A549 (cell line): ENCODE measurements at regions of chr14 and their contacts with region 1.

Region 1: DNA sequence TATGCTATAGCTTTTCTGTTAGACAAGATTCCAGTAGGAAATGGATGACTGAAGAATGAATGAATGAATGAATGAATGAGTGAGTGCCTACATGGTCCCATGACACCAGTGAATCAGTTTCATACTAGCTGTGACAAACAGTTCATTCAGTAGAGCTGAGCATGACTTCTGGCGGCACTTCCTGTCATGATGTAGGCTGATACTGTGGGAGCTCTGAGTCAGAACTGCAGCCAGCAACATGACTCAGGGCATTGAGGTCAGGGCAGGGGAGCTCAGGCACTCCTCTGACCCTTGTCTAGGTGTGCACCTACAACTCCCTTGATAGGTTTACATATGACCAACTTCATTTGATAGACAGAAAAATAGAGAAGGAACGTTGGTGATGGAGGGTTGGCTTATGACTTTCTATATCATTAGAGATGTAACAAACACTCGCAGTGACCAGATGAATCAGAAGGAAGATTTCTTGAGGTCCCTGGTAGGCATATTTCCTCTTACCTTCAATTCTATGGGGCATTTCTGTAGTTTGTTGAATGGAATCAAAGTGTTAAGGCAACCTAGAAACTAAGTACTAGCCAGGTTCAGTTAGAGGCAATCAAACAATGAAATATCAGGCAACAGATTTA is 139.3 kb upstream of the ARHGAP5 start:
- DNase-seq: peak; percentile 75 to 96
- ATAC-seq: peak; percentile 94 to 97
- H3K4me3 ChIP-seq: no peak overlapping the region
- H3K27ac ChIP-seq: peak overlapping the region; percentile 82 to 89
- H3K4me1 ChIP-seq: peaks cover 76% of the 10 kb centered on the region
- CTCF ChIP-seq: no peak
- EP300 ChIP-seq: peak; percentile 35 to 55; a peak in 1 of 5 replicates
- POLR2A ChIP-seq: no peak
- RAD21 ChIP-seq: peak; percentile 19 to 40; a peak in 2 of 5 replicates

Region 2: DNA sequence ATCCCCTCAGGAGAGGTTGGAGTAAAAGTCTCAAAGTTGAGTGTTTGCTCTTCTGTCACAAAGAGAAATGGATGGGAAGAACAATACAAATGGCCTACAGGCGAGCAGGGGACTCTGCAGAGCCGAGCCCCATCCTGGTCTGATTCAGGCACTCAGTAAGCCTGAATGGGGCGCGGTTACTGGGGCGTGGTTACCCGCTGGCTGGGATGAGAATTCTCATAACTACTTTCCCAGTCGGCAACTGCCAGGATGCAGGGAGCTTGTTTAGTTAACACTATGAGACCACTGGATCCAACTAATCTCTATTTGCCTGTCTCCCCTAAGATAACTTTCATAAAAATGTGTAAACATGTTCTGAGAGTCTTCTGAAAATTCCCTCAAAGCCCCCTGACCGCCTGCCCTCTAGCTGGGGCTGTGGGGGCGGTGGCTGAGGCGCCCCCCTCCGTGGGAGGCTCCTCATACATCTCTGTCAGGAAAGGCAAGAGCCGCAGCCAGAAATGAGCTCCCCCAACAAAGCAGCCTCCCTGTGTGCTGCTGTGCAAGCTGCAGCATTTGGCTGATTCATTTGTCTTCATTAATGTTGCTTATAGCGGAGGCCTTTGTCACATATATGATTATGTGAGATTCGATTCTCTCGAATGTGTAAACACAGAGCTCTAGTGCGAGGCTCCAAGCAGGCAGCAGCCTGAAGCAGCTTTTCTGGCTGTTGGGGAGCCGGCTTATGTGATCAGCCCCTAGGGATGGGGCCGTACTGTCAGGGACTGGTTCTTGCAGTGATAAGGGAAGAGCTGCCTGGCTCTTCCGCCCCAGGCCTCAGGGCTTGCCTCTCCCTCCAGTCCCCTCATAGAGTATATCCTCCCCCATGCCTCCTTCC is 13.2 kb after region 1 on chr14:
- CTCF ChIA-PET with region 1: interaction called, 12 read pairs
- POLR2A ChIA-PET with region 1: no interaction called
- DNase-seq: peak; percentile 73 to 89
- ATAC-seq: peak; percentile 94 to 96
- H3K4me3 ChIP-seq: no peak overlapping the region
- H3K27ac ChIP-seq: peak overlapping the region; percentile 82 to 83
- H3K4me1 ChIP-seq: peaks cover 82% of the 10 kb centered on the region
- CTCF ChIP-seq: no peak
- EP300 ChIP-seq: 0 out of 5 replicates have a peak, but pooled peaks of 1 of the 2 experiments have one; percentile 27
- POLR2A ChIP-seq: no peak
- RAD21 ChIP-seq: no peak

Region 3: GRCh38 chr14:32009976-32010863 is 72.4 kb after region 1 on chr14:
- CTCF ChIA-PET with region 1: interaction called, 29 read pairs
- POLR2A ChIA-PET with region 1: interaction called, 11 read pairs
- DNase-seq: peak; percentile 81 to 95
- ATAC-seq: peak; percentile 88 to 90
- H3K4me3 ChIP-seq: no peak overlapping the region
- H3K27ac ChIP-seq: peak overlapping the region; percentile 89 to 92
- H3K4me1 ChIP-seq: peaks cover 72% of the 10 kb centered on the region
- CTCF ChIP-seq: no peak
- EP300 ChIP-seq: peak; percentile 83 to 87; a peak in 4 of 5 replicates
- POLR2A ChIP-seq: no peak
- RAD21 ChIP-seq: peak; percentile 44 to 59; a peak in 4 of 5 replicates

Region 4: DNA sequence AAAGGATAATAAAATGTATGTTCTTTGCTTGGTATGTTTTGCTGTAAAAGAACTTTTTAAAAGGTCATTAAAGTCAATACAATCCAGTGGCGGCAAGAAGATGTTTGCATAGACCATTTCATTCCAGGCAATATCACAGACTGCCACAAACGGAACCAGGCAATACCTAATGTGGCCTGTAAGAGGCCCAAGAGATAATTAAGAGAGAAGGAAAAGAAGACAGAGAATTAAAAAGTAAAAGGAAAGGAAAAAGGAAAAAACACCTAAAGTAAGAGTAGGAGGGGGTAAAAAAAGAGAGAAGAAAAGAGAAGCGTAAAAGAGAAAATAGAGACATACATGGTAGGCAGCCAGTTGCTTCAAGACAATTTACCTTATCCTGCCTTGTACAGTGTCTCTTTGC is 132.4 kb after region 1 on chr14:
- CTCF ChIA-PET with region 1: interaction called, 15 read pairs
- POLR2A ChIA-PET with region 1: interaction called, 4 read pairs
- DNase-seq: no peak
- ATAC-seq: no peak
- H3K4me3 ChIP-seq: no peak overlapping the region
- H3K27ac ChIP-seq: no peak overlapping the region
- H3K4me1 ChIP-seq: peaks cover 16% of the 10 kb centered on the region
- CTCF ChIP-seq: no peak
- EP300 ChIP-seq: no peak
- POLR2A ChIP-seq: no peak
- RAD21 ChIP-seq: no peak

Region 5: DNA sequence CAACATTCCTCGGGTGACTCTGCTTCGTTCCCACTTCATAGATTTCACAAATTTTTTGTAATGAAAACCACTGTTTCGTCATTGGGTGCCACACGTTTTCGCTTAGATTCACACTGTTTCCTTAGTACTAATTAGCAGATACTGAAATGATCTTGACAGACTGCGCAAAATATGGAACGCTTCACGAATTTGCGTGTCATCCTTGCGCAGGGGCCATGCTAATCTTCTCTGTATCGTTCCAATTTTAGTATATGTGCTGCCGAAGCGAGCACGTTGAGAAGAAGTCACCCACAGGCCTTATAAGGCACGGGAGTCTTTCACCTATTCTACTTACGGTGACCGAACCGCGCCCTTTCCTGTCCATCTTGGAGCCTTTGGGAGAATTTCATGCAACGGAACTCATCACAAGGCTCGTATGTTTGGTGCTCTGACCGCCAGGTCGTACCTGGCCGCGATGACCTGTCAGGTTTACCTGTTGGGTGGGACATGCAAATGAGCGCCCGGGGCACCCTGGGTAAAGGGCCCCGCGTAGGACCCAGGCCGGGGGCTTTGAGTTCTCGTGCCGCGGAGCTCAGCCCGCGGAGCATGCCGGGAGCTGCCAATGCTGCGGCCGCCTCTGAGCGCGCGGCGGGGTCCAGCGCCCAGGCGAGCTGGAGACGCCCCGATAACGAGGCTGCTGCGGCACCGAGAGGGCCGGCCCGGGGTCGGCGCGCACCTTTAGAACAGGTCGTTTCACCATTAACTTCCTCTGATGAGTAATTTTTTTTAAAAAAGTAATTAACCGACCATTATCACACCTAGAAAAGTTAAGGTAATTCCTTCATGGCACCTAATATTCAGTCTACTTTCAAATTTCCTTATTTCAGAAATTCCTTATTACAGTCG is 265.4 kb after region 1 on chr14 and contains the start of gene RNU6-8:
- CTCF ChIA-PET with region 1: interaction called, 11 read pairs
- POLR2A ChIA-PET with region 1: no interaction called
- DNase-seq: peak; percentile 62 to 92
- ATAC-seq: peak; percentile 80 to 88
- H3K4me3 ChIP-seq: peak within 1 kb of the TSS; percentile 60
- H3K27ac ChIP-seq: peak within 1 kb of the TSS; percentile 82 to 91
- H3K4me1 ChIP-seq: peaks cover 11% of the 10 kb centered on the region; the same call in 1 of the 3 replicates
- CTCF ChIP-seq: no peak
- EP300 ChIP-seq: no peak
- POLR2A ChIP-seq: peak; percentile 65
- RAD21 ChIP-seq: no peak; a peak in 1 of 5 replicates
- polyA plus RNA-seq, gene RNU6-8: not detected in 2 replicates